ENCODE measurements at regions of chr7 and their contacts with region 1.

Region 1: DNA sequence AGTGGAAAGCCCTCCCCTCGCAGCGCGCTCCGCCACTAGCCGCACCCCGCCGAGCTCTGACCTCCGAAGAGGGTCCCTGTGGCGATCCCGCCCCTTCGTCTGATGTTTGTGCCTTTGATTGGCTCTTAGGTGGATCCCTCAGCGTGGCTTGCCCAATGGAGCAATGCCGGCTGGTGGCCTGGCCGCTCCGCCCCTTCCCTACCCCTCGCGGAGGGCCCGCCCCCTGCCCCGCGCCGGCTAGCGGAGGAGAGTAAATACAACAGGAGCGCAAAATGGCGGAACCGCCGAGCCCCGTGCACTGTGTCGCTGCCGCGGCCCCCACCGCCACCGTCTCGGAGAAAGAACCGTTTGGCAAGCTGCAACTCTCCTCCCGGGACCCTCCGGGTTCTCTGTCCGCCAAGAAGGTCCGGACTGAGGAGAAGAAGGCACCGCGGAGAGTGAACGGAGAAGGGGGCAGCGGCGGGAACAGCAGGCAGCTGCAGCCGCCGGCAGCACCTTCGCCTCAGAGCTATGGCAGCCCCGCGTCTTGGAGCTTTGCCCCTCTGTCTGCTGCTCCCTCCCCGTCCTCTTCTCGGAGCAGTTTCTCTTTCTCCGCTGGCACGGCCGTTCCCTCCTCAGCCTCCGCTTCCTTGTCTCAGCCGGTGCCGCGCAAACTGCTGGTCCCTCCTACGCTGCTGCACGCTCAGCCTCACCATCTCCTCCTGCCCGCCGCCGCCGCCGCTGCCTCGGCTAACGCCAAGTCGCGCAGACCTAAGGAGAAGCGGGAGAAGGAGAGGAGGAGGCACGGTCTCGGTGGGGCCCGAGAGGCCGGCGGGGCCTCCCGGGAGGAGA is at the start of gene RSBN1L:
- DNase-seq: peak; percentile 96
- ATAC-seq: peak; percentile 95
- H3K4me3 ChIP-seq: peak within 1 kb of the TSS; percentile 86
- H3K27ac ChIP-seq: peak within 1 kb of the TSS; percentile 55
- H3K4me1 ChIP-seq: peaks cover 15% of the 10 kb centered on the region
- H3K27me3 ChIP-seq: no peaks in the 10 kb centered on the region
- CTCF ChIP-seq: 0 out of 2 replicates have a peak, but pooled peaks have one; percentile 15
- total RNA-seq, gene RSBN1L: 6.9 and 11.2 TPM in 2 replicates

Region 2: DNA sequence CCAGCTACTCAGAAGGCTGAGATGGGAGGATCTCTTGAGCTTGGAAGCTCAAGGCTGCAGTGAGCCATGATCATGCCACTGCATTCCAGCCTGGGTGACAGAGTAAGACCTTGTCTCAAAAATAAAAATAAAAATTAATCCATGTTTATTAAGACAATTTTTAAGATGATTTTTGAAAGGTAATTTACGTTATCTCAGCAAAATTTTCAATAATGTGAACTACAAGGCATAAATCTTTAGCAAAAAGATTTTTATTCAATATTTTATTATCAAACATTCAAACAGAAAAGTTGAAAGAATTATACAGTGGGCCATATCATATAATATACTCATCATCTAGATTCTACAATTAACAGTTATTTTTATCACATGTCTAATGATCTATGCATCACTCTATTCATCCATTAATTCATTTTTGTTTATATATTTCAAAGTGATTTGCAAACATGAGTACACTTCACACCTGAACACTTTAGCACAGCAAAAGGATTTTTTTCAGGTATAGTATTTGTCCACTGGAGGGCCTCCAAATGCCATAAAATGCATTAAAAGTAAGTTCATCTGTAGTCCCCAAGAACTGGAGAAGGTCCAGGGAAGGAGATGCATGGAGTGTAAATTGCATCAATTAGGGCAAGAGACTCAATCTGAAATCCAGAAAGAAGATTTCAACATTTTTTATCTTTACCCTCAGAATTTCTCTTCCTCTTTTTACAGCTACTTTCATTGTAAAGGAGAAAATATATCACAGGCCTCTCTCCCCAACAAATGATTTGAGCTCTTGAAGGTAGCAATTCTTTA is 38.8 kb before region 1 on chr7:
- CTCF ChIA-PET with region 1: interaction called, 4 read pairs
- POLR2A ChIA-PET with region 1: no interaction called
- intact Hi-C with region 1: loop called (anchors 2 kb)
- DNase-seq: peak; percentile 74
- ATAC-seq: peak; percentile 34
- H3K4me3 ChIP-seq: no peak overlapping the region
- H3K27ac ChIP-seq: no peak overlapping the region
- H3K4me1 ChIP-seq: 0 out of 2 replicates have a peak, but pooled peaks cover 5% of the 10 kb centered on the region
- H3K27me3 ChIP-seq: no peaks in the 10 kb centered on the region
- CTCF ChIP-seq: peak; percentile 82

Region 3: DNA sequence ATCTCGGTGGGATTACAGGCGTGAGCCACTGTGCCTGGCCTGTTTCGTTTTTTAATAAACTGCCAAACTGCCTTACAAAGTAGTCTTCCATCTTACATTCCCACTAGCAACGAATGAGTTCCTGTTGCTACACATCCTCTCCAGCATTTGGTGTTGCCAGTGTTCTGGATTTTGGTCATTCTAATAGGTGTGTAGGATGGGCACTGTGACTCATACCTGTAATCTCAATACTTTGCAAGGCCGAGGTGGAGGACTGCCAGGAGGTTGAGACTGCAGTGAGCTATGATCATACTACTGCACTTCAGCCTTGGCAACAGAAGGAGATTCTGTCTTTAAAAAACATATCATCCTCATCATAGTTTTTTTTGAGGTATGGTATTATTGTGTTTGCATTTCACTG is 21.5 kb before region 1 on chr7:
- CTCF ChIA-PET with region 1: no interaction called
- POLR2A ChIA-PET with region 1: interaction called, 3 read pairs
- intact Hi-C with region 1: loop called (anchors 2 kb)
- DNase-seq: peak; percentile 94
- ATAC-seq: peak; percentile 96
- H3K4me3 ChIP-seq: no peak overlapping the region
- H3K27ac ChIP-seq: peak overlapping the region; percentile 32; the same call in 1 of the 2 replicates
- H3K4me1 ChIP-seq: peaks cover 27% of the 10 kb centered on the region
- H3K27me3 ChIP-seq: no peaks in the 10 kb centered on the region
- CTCF ChIP-seq: no peak

Region 4: DNA sequence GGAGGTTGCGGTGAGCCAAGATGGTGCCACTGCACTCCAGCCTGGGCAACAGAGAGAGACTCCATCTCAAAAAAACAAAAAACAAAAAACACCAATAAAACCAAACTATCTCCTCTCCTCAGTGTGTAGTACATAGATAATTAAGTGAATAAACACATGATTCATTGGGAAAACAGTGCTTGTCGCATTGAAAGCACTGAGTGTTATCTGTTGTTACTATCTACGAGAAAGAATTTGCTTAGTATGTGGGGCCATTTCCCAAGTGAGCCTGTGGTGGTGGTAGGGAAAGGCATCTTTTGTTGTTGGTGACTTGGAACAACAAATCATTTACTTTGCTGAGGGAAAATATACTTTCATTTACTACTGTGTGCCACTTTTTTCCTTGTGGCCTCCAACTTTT is 42.5 kb after region 1 on chr7:
- CTCF ChIA-PET with region 1: no interaction called
- POLR2A ChIA-PET with region 1: no interaction called
- intact Hi-C with region 1: loop called (anchors 5 kb)
- DNase-seq: peak; percentile 57
- ATAC-seq: peak; percentile 77
- H3K4me3 ChIP-seq: no peak overlapping the region
- H3K27ac ChIP-seq: no peak overlapping the region
- H3K4me1 ChIP-seq: peaks cover 15% of the 10 kb centered on the region
- H3K27me3 ChIP-seq: no peaks in the 10 kb centered on the region
- CTCF ChIP-seq: no peak

Region 5: DNA sequence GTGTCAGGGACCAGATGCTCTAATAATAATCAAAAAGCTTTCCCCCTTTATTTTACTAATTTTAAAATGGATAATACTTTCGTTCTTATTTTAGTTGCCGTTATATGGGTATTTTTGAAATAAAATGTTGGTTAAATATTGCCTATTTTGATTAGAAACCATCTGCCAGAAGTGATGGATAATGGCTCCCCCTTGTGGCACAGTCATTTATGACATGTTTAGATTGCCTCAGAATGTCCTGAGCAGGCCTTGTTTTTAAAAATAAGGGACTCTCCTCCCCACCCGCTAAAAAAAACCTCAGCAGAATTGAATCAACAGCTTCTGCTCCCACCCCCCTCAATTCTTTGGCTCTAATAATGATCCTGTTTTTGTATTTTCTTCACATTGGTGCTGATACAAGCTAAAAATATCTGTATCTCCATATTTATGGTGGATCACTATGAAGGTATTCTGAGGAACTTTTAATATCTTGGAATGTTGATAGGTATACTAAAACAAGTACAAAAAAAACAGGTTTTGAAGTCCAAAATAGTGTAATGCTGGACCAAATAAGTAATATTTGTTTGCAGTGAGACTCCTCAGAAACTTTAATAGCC is 63.0 kb after region 1 on chr7:
- CTCF ChIA-PET with region 1: no interaction called
- POLR2A ChIA-PET with region 1: no interaction called
- intact Hi-C with region 1: loop called (anchors 1 kb)
- DNase-seq: peak; percentile 83
- ATAC-seq: peak; percentile 78
- H3K4me3 ChIP-seq: no peak overlapping the region
- H3K27ac ChIP-seq: no peak overlapping the region
- H3K4me1 ChIP-seq: no peaks in the 10 kb centered on the region
- H3K27me3 ChIP-seq: no peaks in the 10 kb centered on the region
- CTCF ChIP-seq: peak; percentile 89

Region 6: GRCh38 chr7:77798394-77799077 is 102.1 kb after region 1 on chr7 and contains the starts of genes PHTF2 and TMEM60:
- CTCF ChIA-PET with region 1: no interaction called
- POLR2A ChIA-PET with region 1: no interaction called
- intact Hi-C with region 1: loop called (anchors 1 kb)
- DNase-seq: peak; percentile 99
- ATAC-seq: peak; percentile 90
- H3K4me3 ChIP-seq: peak within 1 kb of the TSS; percentile 86
- H3K27ac ChIP-seq: peak within 1 kb of the TSS; percentile 53
- H3K4me1 ChIP-seq: peaks cover 19% of the 10 kb centered on the region
- H3K27me3 ChIP-seq: no peaks in the 10 kb centered on the region
- CTCF ChIP-seq: peak; percentile 54
- total RNA-seq, gene PHTF2: 13.9 and 20.4 TPM in 2 replicates
- total RNA-seq, gene TMEM60: 6.9 and 8.1 TPM in 2 replicates

Measured in PC-3 (cell line).